ENCODE measurements at regions of chr20 and their contacts with region 1.

Region 1: GRCh38 chr20:37095599-37096414 is at the start of gene RBL1:
- DNase-seq: peak; percentile 69 to 93 (median 85)
- ATAC-seq: peak; percentile 78
- H3K4me3 ChIP-seq: peak within 1 kb of the TSS; percentile 79 to 96
- H3K4me3 Mint-ChIP-seq: peak within 1 kb of the TSS; percentile 99
- H3K27ac ChIP-seq: peak within 1 kb of the TSS; percentile 79 to 89
- H3K27ac Mint-ChIP-seq: peak within 1 kb of the TSS; percentile 99
- H3K4me1 ChIP-seq: peaks cover 18% of the 10 kb centered on the region
- H3K4me1 Mint-ChIP-seq: peaks cover 28% of the 10 kb centered on the region
- H3K27me3 ChIP-seq: no peaks in the 10 kb centered on the region
- H3K27me3 Mint-ChIP-seq: no peaks in the 10 kb centered on the region
- CTCF ChIP-seq: no peak
- total RNA-seq, gene RBL1: 29.6 to 32.6 TPM

Region 2: GRCh38 chr20:36745927-36746659 is 349.7 kb before region 1 on chr20 and contains the start of gene NDRG3:
- CTCF ChIA-PET with region 1: no interaction called
- POLR2A ChIA-PET with region 1: no interaction called
- intact Hi-C with region 1: loop called in 1 of 2 experiments (anchors 5 kb)
- DNase-seq: peak; percentile 85 to 97 (median 92)
- ATAC-seq: peak; percentile 97
- H3K4me3 ChIP-seq: peak within 1 kb of the TSS; percentile 85 to 87
- H3K4me3 Mint-ChIP-seq: peak within 1 kb of the TSS; percentile 88
- H3K27ac ChIP-seq: peak within 1 kb of the TSS; percentile 44 to 74
- H3K27ac Mint-ChIP-seq: peak within 1 kb of the TSS; percentile 90
- H3K4me1 ChIP-seq: peaks cover 7% of the 10 kb centered on the region
- H3K4me1 Mint-ChIP-seq: peaks cover 29% of the 10 kb centered on the region
- H3K27me3 ChIP-seq: no peaks in the 10 kb centered on the region
- H3K27me3 Mint-ChIP-seq: no peaks in the 10 kb centered on the region
- CTCF ChIP-seq: no peak
- total RNA-seq, gene NDRG3: 12.9 to 15.1 TPM

Region 3: DNA sequence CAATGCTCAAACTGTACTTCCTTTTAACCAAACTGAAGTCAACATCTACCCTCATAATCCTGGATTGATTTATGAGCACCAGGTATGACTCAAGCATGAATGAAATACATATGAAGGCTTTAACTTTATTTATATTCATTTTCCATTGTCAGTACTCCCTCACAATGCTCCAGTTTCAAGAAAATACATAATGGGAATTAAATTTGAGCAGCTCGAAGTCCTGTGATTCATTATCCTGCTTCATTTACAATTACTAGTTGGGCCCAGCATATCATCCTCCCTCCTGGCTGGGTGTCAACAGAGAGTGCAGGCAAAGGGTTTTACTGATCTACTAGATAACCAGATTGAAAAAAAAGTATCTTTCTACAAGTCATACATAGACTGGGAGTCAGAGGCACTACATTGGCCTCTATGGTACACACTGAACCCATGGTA is 154.4 kb before region 1 on chr20:
- CTCF ChIA-PET with region 1: interaction called, 3 read pairs
- POLR2A ChIA-PET with region 1: no interaction called
- intact Hi-C with region 1: loop called in 1 of 2 experiments (anchors 1 kb)
- DNase-seq: peak in 2 of 9 experiments; percentile 27 to 35
- ATAC-seq: no peak
- H3K4me3 ChIP-seq: peak overlapping the region in 1 of 2 experiments; percentile 5
- H3K4me3 Mint-ChIP-seq: peak overlapping the region; percentile 52
- H3K27ac ChIP-seq: peak overlapping the region; percentile 13 to 67
- H3K27ac Mint-ChIP-seq: peak overlapping the region; percentile 88
- H3K4me1 ChIP-seq: peaks cover 82% of the 10 kb centered on the region
- H3K4me1 Mint-ChIP-seq: peaks cover 68% of the 10 kb centered on the region
- H3K27me3 ChIP-seq: no peaks in the 10 kb centered on the region
- H3K27me3 Mint-ChIP-seq: no peaks in the 10 kb centered on the region
- CTCF ChIP-seq: no peak

Region 4: DNA sequence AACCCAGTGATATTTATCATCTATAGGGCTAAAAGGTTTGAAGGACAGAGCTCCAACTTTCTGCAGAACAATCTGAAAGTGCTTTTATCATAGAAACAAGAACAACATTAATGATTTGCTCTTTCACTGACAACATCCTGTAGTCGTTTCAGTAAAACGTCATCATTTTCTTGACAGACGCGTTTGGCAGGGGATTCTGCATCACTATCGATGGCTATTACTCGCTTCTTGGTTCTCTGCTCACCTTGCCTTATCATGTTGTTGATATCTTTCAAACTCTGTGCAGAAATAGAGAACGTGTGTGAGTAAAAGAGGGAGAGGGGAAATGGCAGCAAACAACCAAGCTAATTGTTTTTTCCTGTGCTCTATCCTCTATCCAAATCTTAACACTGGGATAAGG is 97.2 kb before region 1 on chr20:
- CTCF ChIA-PET with region 1: no interaction called
- POLR2A ChIA-PET with region 1: no interaction called
- intact Hi-C with region 1: no loop called
- DNase-seq: no peak
- ATAC-seq: no peak
- H3K4me3 ChIP-seq: no peak overlapping the region
- H3K4me3 Mint-ChIP-seq: no peak overlapping the region
- H3K27ac ChIP-seq: no peak overlapping the region
- H3K27ac Mint-ChIP-seq: peak overlapping the region; percentile 69
- H3K4me1 ChIP-seq: no peaks in the 10 kb centered on the region
- H3K4me1 Mint-ChIP-seq: peaks cover 6% of the 10 kb centered on the region
- H3K27me3 ChIP-seq: no peaks in the 10 kb centered on the region
- H3K27me3 Mint-ChIP-seq: no peaks in the 10 kb centered on the region
- CTCF ChIP-seq: no peak

Region 5: DNA sequence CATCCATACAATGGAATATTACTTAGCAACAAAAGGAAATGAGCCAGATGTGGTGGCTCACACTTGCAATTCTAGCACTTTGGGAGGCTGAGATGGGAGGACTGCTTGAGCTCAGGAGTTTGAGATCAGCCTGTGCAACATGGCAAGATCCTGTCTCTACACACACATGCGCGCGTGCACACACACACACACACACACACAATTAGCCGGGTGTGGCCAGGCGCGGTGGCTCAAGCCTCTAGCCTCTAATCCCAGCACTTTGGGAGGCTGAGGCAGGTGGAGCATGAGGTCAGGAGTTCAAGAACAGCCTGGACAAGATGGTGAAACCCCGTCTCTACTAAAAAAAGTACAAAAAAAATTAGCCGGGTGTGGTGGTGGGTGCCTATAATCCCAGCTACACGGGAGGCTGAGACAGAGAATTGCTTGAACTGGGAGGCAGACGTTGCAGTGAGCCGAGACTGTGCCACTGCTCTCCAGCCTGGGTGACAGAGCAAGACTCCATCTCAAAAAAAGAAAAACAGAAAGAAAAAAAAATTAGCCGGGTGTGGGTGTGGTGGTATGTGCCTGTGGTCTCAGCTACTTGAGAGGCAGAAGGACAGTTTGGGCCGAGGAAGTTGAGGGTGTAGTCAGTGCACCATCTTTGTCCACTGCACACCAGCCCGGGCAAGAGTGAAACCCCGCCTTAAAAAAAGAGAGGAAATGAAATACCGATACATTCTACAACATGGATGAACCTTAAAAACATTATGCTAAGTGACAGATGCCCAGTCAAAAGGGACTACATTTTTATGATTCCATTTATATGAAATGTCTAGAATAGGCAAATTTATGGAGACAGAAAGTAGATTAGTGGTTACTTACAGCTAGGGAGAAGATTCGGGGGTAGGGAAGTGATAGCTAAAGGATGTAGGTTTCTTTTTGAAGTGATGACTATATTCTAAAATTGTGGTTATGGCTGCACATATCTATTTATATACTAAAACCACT is 52.5 kb before region 1 on chr20:
- CTCF ChIA-PET with region 1: no interaction called
- POLR2A ChIA-PET with region 1: interaction called, 3 read pairs
- intact Hi-C with region 1: loop called in 1 of 2 experiments (anchors 2 kb)
- DNase-seq: peak in 8 of 9 experiments; percentile 4 to 70 (median 34)
- ATAC-seq: peak; percentile 79
- H3K4me3 ChIP-seq: peak overlapping the region; percentile 24 to 36
- H3K4me3 Mint-ChIP-seq: peak overlapping the region; percentile 84
- H3K27ac ChIP-seq: peak overlapping the region; percentile 49 to 65
- H3K27ac Mint-ChIP-seq: peak overlapping the region; percentile 89
- H3K4me1 ChIP-seq: peaks cover 15% of the 10 kb centered on the region
- H3K4me1 Mint-ChIP-seq: peaks cover 26% of the 10 kb centered on the region
- H3K27me3 ChIP-seq: no peaks in the 10 kb centered on the region
- H3K27me3 Mint-ChIP-seq: no peaks in the 10 kb centered on the region
- CTCF ChIP-seq: no peak

Region 6: DNA sequence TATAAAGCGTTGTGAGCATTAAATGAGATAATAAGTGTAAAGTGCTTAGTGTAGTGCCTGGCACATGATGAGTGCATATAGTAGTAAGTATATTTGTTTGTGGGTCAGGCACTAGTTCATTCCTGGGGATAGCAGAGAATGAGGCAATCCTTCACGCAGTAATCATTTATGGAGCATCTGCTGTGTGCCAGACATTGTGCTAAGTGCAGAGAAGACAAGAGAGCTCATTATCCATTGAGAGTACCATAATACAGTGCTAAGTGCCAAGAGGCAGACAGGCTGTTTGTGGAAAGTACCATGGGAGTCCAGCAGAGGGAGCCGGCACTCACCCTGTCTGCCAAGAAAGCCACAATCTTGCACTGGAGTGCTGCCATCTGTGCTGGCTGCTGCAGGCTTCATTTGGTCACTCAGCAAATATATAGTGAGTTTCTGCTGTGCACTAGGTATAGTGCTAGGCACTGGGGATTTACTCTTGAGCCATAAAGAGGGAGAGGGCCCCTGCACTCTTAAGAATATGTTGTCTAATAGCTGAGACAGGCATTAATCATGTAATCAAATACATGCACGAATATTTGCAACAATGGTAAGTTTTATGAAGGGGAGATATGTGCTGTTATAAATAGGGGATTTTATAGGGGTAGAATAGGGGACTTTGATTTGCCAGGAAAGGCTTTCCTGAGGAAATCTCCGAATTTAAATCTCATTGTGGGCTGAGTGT is 96.5 kb after region 1 on chr20:
- CTCF ChIA-PET with region 1: no interaction called
- POLR2A ChIA-PET with region 1: no interaction called
- intact Hi-C with region 1: loop called in 1 of 2 experiments (anchors 5 kb)
- DNase-seq: peak; percentile 46 to 80 (median 72)
- ATAC-seq: peak; percentile 80
- H3K4me3 ChIP-seq: no peak overlapping the region
- H3K4me3 Mint-ChIP-seq: no peak overlapping the region
- H3K27ac ChIP-seq: no peak overlapping the region
- H3K27ac Mint-ChIP-seq: no peak overlapping the region
- H3K4me1 ChIP-seq: peaks cover 48% of the 10 kb centered on the region
- H3K4me1 Mint-ChIP-seq: peaks cover 79% of the 10 kb centered on the region
- H3K27me3 ChIP-seq: no peaks in the 10 kb centered on the region
- H3K27me3 Mint-ChIP-seq: no peaks in the 10 kb centered on the region
- CTCF ChIP-seq: peak; percentile 95

Region 7: DNA sequence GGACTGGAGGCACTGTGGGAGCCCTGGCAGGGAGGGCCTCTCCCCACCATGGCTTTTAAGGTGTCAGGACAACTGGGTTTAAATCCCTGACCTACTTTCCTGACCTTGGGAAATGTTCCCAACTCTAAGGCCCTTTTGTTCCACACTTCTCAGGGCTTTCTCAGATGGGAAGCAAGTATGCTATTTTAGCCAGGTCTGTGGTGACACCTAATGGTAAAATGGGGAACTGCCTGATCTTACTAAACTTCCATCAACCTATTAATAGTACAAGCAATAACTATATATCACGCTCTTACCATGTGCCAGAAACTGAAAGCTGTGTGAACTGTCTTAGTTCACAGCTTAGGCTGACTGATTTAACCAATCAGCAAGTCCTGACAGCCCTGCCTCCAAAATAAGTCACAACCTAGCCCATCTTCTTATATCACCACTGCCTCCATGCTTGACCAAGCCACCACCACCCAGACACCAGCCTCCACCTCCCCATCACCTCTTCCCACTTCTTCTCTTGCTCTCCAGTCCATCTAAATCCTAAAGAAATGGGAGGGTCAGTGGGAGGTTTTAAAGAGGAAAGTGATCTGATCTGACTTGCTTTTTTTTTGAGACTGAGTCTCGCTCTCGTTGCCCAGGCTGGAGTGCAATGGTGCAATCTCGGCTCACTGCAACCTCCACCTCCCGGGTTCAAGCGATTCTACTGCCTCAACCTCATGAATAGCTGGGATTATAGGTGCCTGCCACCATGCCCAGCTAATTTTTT is 438.8 kb after region 1 on chr20:
- CTCF ChIA-PET with region 1: no interaction called
- POLR2A ChIA-PET with region 1: no interaction called
- intact Hi-C with region 1: loop called in 1 of 2 experiments (anchors 2 kb)
- DNase-seq: peak in 6 of 9 experiments; percentile 25 to 83 (median 57)
- ATAC-seq: peak; percentile 96
- H3K4me3 ChIP-seq: no peak overlapping the region
- H3K4me3 Mint-ChIP-seq: no peak overlapping the region
- H3K27ac ChIP-seq: no peak overlapping the region
- H3K27ac Mint-ChIP-seq: no peak overlapping the region
- H3K4me1 ChIP-seq: no peaks in the 10 kb centered on the region
- H3K4me1 Mint-ChIP-seq: no peaks in the 10 kb centered on the region
- H3K27me3 ChIP-seq: no peaks in the 10 kb centered on the region
- H3K27me3 Mint-ChIP-seq: peaks cover 10% of the 10 kb centered on the region
- CTCF ChIP-seq: peak; percentile 95